Left ventricle myocardium superior (tissue), 1 donor: ENCODE measurements at regions of chr3 and their contacts with region 1.

Region 1: DNA sequence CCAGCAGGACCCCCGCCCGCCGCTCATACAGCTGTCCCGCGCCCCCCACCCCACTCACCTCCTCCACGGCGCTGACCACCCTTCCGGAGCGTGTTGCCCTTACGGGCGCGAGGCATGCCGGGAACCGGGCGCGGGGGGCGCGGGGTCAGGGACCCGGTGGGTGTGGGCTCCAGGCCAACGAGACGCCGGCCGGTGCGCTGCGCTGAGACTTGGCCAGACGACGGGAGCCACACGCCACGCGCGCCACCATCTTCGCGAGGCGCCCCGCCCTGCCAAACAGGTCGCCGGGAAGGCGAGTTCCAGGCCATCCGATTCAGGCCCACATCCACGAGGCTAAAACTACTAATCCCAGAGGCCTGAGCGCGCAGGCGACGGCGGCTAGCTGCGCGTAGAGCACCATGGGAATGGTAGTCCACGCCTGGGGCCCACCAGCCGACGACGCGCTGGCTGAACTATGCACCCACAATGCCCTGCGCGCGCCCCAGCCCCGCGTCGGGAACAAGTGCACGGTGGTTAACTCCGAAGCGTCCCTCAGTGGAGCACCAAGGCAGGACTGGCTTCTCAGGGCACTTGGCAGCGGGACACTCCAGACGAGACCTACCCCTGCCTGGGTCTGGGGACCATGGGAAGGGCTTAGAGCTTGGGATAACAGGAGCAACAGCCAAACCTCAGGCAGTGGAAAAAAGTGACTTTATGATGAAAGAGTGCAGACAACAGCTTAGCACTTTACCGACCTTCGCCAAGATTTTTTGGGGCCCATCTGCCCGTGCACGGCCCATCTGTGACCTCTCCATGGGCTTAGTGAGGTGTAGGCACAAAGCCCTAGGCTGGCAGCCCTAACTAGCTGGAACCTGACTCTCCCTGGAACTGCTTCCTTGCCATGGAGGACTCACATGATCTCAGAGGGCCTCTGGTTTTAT is at the start of gene IFRD2:
- DNase-seq: peak; percentile 99
- ATAC-seq: peak; percentile 94
- total RNA-seq, gene IFRD2: 79.3 TPM

Region 2: GRCh38 chr3:49712631-49713319 is 579.6 kb before region 1 on chr3:
- intact Hi-C with region 1: no loop called
- DNase-seq: peak; percentile 20
- ATAC-seq: no peak

Region 3: GRCh38 chr3:50274371-50275104 is 17.9 kb before region 1 on chr3:
- intact Hi-C with region 1: loop called (anchors 2 kb)
- DNase-seq: peak; percentile 70
- ATAC-seq: peak; percentile 9